ENCODE measurements at regions of chr6 and their contacts with region 1.

Region 1: GRCh38 chr6:137271245-137272183 is 52.3 kb upstream of the IFNGR1 start:
- DNase-seq: no peak
- ATAC-seq: peak; percentile 75
- H3K4me3 Mint-ChIP-seq: no peak overlapping the region
- H3K27ac Mint-ChIP-seq: no peak overlapping the region
- H3K4me1 Mint-ChIP-seq: peaks cover 20% of the 10 kb centered on the region
- H3K27me3 Mint-ChIP-seq: no peaks in the 10 kb centered on the region
- CTCF ChIP-seq: peak; percentile 61

Region 2: DNA sequence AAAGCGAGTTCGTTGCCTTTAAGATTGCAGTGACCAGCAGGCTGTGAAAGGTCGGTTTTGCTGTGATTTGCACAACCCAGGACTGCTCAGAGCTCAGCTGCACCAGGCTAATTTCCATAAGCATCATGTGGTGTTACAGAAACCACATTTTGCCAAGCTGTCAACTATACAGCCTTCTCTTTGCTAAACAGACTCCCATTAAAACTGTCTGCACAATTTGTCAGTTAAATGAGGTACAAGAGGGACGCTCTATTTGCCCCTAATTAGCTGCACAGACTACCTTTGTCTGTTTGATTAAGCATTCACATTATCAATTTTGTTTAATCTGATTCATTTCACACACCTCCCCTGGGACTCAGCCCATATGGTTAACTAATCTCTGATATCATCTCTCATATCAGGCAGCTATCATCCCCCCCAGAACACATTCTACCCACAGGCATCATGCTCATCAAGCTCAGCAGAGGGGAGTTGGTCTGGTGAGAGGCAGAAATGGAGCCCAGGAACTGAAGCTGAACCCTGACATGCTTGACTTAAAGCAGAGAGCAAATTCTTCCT is 160.6 kb after region 1 on chr6:
- CTCF ChIA-PET with region 1: interaction called, 3 read pairs
- POLR2A ChIA-PET with region 1: no interaction called
- intact Hi-C with region 1: loop called (anchors 5 kb)
- DNase-seq: no peak
- ATAC-seq: peak; percentile 65
- H3K4me3 Mint-ChIP-seq: peak overlapping the region; percentile 81
- H3K27ac Mint-ChIP-seq: peak overlapping the region; percentile 26
- H3K4me1 Mint-ChIP-seq: peaks cover 40% of the 10 kb centered on the region
- H3K27me3 Mint-ChIP-seq: no peaks in the 10 kb centered on the region
- CTCF ChIP-seq: no peak

Region 3: DNA sequence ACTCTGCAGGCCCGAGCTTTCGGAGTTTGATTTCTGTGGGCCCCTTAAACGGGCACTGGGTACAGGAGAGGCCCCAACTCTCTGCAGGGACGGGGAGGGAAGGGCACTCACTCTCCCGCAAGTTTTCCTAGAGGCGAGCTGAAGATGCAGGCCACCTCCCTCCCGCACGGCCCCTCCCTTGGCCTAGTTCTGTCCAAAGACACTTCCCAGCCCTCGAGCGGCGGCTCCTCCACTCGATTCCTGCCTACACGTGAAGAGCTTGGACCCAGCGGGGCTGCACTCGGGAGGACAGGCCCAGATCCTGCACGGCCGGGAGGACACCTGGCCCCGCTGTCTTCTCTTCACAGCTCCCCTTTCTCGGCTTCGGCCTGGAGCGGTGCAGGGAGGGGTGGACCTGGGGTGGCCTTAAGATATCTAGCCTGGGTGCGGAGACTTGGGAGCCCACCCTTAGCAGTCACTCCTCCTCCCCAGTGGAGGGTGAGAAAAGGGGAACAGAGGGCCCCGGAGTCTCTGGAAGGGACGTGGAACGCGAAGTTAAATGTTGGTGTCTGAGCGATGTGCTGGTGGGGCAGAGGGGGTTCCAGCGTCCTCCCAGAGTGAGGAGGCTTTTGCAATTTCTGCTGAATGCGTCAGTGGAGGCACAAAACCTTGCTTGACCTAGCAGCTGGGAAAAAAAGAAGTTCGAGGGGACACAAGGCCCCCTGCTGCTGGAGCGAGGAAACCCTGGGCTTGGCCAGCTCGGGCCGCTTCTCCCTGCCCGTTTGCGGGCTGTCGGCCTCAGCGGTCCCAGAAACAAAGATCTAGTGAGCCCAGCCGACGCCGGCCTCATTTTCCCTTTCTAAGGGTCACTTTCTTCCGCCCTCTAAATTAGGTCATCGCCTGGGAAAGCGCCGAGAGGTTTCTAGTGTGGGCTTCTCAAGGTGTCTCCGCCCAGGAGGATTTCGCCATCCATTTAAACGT is 217.8 kb after region 1 on chr6:
- CTCF ChIA-PET with region 1: no interaction called
- POLR2A ChIA-PET with region 1: no interaction called
- intact Hi-C with region 1: loop called (anchors 5 kb)
- DNase-seq: no peak
- ATAC-seq: peak; percentile 10
- H3K4me3 Mint-ChIP-seq: peak overlapping the region; percentile 33
- H3K27ac Mint-ChIP-seq: no peak overlapping the region
- H3K4me1 Mint-ChIP-seq: peaks cover 47% of the 10 kb centered on the region
- H3K27me3 Mint-ChIP-seq: peaks cover 78% of the 10 kb centered on the region
- CTCF ChIP-seq: no peak

Region 4: DNA sequence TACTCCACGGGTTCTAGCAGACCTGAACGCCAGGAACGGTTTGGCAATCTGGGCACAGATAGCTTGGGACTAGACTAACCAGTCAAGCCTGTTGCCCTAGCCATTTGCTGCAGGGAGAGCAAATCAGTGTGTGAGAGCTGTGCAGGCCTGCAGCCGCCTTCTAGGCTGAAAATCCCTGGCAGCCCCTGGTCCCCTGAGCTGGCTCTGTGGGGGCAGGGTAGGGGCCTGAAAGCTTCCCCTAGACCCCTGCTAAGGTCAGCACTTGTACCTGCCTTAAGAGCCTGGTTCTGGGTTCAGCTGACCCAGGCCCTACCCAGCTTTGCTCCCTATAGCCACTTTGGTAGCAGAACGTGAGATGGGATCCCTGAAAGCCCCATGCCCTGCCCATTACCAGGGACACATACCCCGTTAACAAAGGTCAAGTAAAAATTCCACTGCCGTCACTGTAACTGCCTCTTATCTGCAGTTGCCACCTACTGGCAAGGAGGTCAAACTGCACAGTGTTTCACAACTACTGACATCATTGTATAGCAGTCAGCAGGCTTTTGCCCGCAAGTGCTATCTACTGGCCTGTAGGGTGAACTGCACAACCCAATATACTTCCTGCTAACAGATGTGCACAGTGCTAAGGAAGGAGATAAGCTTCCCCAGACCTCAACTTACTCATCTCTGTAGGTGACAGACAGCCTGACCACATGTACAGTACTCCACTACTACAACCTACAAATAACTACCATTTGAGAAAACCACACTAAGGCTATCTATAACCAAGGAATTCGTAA is 317.7 kb after region 1 on chr6:
- CTCF ChIA-PET with region 1: no interaction called
- POLR2A ChIA-PET with region 1: no interaction called
- intact Hi-C with region 1: loop called (anchors 5 kb)
- DNase-seq: no peak
- ATAC-seq: peak; percentile 90
- H3K4me3 Mint-ChIP-seq: no peak overlapping the region
- H3K27ac Mint-ChIP-seq: no peak overlapping the region
- H3K4me1 Mint-ChIP-seq: no peaks in the 10 kb centered on the region
- H3K27me3 Mint-ChIP-seq: peaks cover 30% of the 10 kb centered on the region
- CTCF ChIP-seq: no peak

Region 5: DNA sequence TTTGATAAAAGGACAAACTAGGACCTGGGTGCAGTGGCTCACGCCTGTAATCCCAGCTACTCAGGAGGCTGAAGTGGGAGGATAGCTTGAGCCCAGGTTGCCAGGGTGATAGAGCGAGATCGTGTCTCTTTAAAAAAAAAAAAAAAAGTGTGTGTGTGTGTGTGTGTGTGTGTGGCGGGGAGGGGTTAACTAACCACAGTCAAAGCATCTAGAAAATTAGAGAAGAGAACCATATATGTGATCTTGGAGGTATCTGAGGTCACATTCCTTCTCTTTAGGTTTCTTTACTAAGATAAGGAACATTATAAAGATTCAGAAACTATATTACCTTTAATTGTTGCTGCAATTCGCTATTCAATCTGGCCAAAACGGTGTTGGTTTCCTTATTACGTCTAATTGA is 1635.7 kb after region 1 on chr6:
- CTCF ChIA-PET with region 1: no interaction called
- POLR2A ChIA-PET with region 1: no interaction called
- intact Hi-C with region 1: no loop called
- DNase-seq: no peak
- ATAC-seq: no peak
- H3K4me3 Mint-ChIP-seq: no peak overlapping the region
- H3K27ac Mint-ChIP-seq: no peak overlapping the region
- H3K4me1 Mint-ChIP-seq: peaks cover 6% of the 10 kb centered on the region
- H3K27me3 Mint-ChIP-seq: no peaks in the 10 kb centered on the region
- CTCF ChIP-seq: no peak

Measured in activated B cell treated with CpG ODN at 0.5 μM for 24 hours (primary cell).